GM12878 (cell line): ENCODE measurements at regions of chr4 and their contacts with region 1.

Region 1: DNA sequence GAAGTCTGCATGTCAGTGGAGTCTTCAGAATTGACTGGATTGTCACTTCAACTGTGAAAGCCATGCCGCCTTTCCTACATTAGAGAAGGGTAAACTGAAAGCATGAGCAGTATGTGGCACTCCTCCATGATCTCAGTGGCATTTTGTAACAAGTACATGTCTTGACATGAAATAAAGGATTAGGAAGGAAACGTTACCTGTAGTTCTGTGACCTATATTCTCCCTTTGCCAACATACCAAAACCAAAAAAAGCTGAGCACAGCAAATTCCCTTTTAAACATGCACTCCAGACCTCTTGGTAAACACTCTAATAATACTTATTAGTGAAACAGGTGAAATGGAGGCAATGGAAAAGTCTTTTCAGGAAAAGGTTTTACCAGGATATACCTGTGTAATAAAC is 344.2 kb downstream of the GRIA2 start:
- DNase-seq: no peak
- ATAC-seq: no peak
- H3K4me3 ChIP-seq: no peak overlapping the region
- H3K27ac ChIP-seq: no peak overlapping the region
- H3K4me1 ChIP-seq: no peaks in the 10 kb centered on the region
- H3K27me3 ChIP-seq: no peaks in the 10 kb centered on the region
- CTCF ChIP-seq: no peak
- EP300 ChIP-seq: no peak
- POLR2A ChIP-seq: no peak
- RAD21 ChIP-seq: no peak

Region 2: DNA sequence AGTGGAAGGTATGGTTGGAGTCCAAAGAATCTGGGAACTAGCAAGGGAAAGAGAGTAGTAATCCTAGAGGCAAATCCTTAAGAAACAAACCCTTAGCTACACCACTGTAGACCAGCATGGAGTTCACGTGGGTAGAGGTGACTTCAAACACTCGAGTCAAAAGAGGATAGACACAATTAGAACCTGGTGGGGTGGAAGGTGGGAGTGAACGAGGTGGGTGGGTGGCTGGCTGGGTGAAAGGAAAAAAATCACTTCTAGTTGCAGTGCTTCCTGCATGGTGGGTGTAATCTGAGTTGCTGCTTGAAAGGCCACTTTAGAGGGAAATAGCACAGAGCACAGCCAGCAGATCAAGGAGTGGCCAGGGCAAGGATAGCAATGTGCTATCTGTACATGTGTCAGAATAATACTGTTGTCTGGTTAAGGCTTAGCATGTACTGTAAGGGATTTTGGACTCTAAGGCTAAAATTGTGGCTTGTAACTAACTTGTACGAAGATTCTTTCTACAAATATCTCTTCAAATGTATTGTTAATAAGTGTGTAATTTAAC is 12.0 kb after region 1 on chr4:
- CTCF ChIA-PET with region 1: no interaction called
- POLR2A ChIA-PET with region 1: no interaction called
- RAD21 ChIA-PET with region 1: no interaction called
- SMC1A ChIA-PET with region 1: no interaction called
- in situ Hi-C with region 1: no loop called
- intact Hi-C with region 1: no loop called
- DNase-seq: no peak
- ATAC-seq: no peak
- H3K4me3 ChIP-seq: no peak overlapping the region
- H3K27ac ChIP-seq: no peak overlapping the region
- H3K4me1 ChIP-seq: no peaks in the 10 kb centered on the region
- H3K27me3 ChIP-seq: no peaks in the 10 kb centered on the region
- CTCF ChIP-seq: no peak
- EP300 ChIP-seq: no peak
- POLR2A ChIP-seq: no peak
- RAD21 ChIP-seq: no peak

Region 3: GRCh38 chr4:157600583-157600982 is 35.8 kb after region 1 on chr4:
- CTCF ChIA-PET with region 1: no interaction called
- POLR2A ChIA-PET with region 1: no interaction called
- RAD21 ChIA-PET with region 1: no interaction called
- SMC1A ChIA-PET with region 1: no interaction called
- in situ Hi-C with region 1: no loop called
- intact Hi-C with region 1: loop called (anchors 2 kb)
- DNase-seq: no peak
- ATAC-seq: no peak
- H3K4me3 ChIP-seq: no peak overlapping the region
- H3K27ac ChIP-seq: no peak overlapping the region
- H3K4me1 ChIP-seq: no peaks in the 10 kb centered on the region
- H3K27me3 ChIP-seq: no peaks in the 10 kb centered on the region
- CTCF ChIP-seq: no peak
- EP300 ChIP-seq: no peak
- POLR2A ChIP-seq: no peak
- RAD21 ChIP-seq: no peak